ENCODE measurements at regions of chr13 and their contacts with region 1.

Region 1: DNA sequence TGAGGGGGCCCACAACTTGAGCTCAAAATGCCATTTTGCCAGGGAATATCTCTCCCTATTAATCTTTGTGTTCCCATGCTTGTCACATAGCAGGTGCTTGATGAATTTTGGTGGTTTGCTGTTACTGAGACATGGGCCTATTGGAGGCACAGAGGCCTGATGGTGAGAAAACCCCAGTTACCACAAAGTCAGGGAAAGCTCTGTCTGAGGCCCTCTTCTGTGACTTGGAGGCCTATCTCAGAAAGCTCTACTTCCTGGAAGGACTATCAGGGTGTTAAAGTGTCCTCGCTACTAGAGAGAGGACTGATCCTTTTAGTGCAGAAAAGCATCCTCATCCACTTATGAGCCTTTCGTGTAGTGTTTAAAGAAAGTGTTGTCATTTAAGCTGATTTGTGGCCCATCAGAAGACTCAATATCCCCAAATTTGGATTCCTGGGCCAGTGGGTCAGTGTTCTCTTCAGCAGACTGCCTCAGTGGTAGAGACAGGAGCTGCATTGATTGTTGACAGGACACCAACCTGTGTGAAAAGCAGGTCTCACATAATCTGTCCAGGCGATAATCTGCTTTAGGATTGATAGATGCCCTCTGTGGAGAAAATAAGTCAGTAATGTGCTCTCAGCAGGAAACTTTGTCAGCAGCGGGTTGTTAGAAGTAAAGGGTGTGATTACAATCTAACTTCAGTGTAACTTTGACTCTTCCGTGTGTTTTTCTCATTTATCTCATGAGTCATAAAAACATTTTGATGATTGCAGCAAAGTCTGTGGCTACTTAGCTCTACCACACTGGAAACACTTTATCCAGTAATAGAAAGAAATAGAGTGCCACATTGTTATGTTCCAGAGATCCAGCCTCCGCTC is 121.0 kb downstream of the AKAP11 start:
- DNase-seq: peak in 3 of 9 donors; percentile 13 to 51 (median 30)
- ATAC-seq: peak; percentile 68
- H3K4me3 ChIP-seq: no peak overlapping the region
- H3K4me3 Mint-ChIP-seq: peak overlapping the region; percentile 10 to 83 (median 68)
- H3K27ac ChIP-seq: no peak overlapping the region
- H3K27ac Mint-ChIP-seq: peak overlapping the region; percentile 2 to 98 (median 78)
- H3K4me1 ChIP-seq: peaks cover 47 to 68% of the 10 kb centered on the region in 2 donors
- H3K4me1 Mint-ChIP-seq: peaks cover 32 to 77% (median 73%) of the 10 kb centered on the region in 7 donors
- H3K27me3 ChIP-seq: no peaks in the 10 kb centered on the region
- H3K27me3 Mint-ChIP-seq: no peaks in the 10 kb centered on the region

Region 2: DNA sequence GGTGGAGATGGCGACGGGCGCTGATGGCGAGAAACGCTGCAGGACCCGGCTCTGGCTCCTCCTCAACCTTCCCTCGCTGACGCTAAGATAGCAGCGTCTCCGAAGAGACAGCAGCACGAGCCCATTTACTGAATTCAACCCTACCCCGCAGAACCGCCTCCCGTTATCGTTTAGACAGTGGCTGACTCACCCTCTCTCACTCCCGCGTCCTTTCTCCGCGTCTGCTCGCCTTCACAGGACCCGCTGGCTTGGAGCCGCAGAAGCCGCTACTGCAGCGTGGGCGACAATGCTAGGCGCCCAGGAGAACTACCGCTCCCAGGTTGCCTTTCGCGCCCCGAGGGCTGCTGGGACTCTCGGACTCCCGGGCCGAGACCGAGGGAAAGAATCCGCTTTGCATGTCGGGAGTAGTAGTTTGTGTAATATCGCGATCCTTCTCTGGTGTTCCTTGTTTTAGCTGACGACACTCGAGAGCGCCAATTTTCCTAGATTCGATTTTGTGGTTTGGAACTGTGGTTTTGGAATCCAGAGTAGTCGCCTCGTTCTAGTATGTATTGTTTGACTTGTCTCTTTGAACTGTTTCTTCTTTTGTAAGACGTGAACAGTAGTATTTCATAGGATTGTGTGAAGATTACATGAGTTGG is 1260.3 kb before region 1 on chr13 and contains the start of gene KBTBD6:
- CTCF ChIA-PET with region 1: no interaction called
- POLR2A ChIA-PET with region 1: no interaction called
- intact Hi-C with region 1: no loop called
- DNase-seq: peak; percentile 76 to 93 (median 87)
- ATAC-seq: peak; percentile 98
- H3K4me3 ChIP-seq: peak within 1 kb of the TSS; percentile 77
- H3K4me3 Mint-ChIP-seq: peak within 1 kb of the TSS; percentile 94 to 99 (median 98)
- H3K27ac ChIP-seq: peak within 1 kb of the TSS; percentile 67
- H3K27ac Mint-ChIP-seq: peak within 1 kb of the TSS; percentile 91 to 97 (median 93)
- H3K4me1 ChIP-seq: peaks cover 15 to 24% of the 10 kb centered on the region in 2 donors
- H3K4me1 Mint-ChIP-seq: peaks cover 32 to 60% (median 54%) of the 10 kb centered on the region in 7 donors
- H3K27me3 ChIP-seq: no peaks in the 10 kb centered on the region
- H3K27me3 Mint-ChIP-seq: no peaks in the 10 kb centered on the region
- total RNA-seq, gene KBTBD6: 3.9 to 9.2 (median 7.7) TPM

Region 3: DNA sequence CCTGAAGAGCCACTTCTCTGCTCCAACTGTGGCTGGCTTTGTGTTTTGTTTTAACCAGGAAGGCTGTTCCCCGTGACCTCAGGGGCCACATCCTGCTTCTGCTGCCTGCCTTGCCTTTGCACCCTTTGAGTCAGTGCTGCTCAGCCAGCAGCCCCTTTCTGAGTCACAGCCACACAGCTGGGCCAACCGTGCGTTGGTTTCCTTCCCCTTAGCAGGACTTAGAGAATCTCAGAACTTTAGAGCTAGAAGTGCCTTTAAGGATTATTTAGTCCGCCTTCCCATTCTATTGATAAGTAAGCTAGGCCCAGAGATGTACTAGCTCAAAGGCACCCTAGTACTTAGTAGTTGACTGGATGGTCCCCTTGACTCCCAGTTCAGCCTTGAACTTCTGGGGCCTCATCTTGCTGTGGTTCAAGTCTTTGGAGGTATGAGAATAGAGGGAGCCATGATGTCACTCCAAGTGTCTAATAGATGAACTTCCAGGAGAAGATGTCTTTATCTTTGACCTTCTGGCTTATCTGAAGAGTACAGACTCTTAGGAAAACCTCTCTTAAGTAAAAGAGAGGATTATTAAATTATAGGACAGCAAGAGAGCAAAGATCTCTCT is 927.6 kb before region 1 on chr13:
- CTCF ChIA-PET with region 1: no interaction called
- POLR2A ChIA-PET with region 1: no interaction called
- intact Hi-C with region 1: loop called in 1 of 2 experiments (anchors 10 kb)
- DNase-seq: peak; percentile 63 to 90 (median 89)
- ATAC-seq: peak; percentile 72
- H3K4me3 ChIP-seq: peak overlapping the region; percentile 51
- H3K4me3 Mint-ChIP-seq: peak overlapping the region; percentile 89 to 98 (median 94)
- H3K27ac ChIP-seq: peak overlapping the region; percentile 97
- H3K27ac Mint-ChIP-seq: peak overlapping the region; percentile 96 to 100 (median 99)
- H3K4me1 ChIP-seq: peaks cover 64 to 87% of the 10 kb centered on the region in 2 donors
- H3K4me1 Mint-ChIP-seq: peaks cover 64 to 98% (median 93%) of the 10 kb centered on the region in 7 donors
- H3K27me3 ChIP-seq: no peaks in the 10 kb centered on the region
- H3K27me3 Mint-ChIP-seq: no peaks in the 10 kb centered on the region

Region 4: GRCh38 chr13:42039946-42040729 is 352.8 kb before region 1 on chr13:
- CTCF ChIA-PET with region 1: no interaction called
- POLR2A ChIA-PET with region 1: no interaction called
- intact Hi-C with region 1: loop called (anchors 10 kb)
- DNase-seq: peak; percentile 67 to 87 (median 79)
- ATAC-seq: peak; percentile 92
- H3K4me3 ChIP-seq: peak overlapping the region; percentile 70
- H3K4me3 Mint-ChIP-seq: peak overlapping the region; percentile 83 to 95 (median 90)
- H3K27ac ChIP-seq: peak overlapping the region; percentile 73
- H3K27ac Mint-ChIP-seq: peak overlapping the region; percentile 29 to 91 (median 84)
- H3K4me1 ChIP-seq: peaks cover 7 to 8% of the 10 kb centered on the region in 2 donors
- H3K4me1 Mint-ChIP-seq: peaks cover 7 to 22% (median 20%) of the 10 kb centered on the region in 7 donors
- H3K27me3 ChIP-seq: no peaks in the 10 kb centered on the region
- H3K27me3 Mint-ChIP-seq: peaks cover 0 to 58% (median 0%) of the 10 kb centered on the region in 5 donors

Region 5: DNA sequence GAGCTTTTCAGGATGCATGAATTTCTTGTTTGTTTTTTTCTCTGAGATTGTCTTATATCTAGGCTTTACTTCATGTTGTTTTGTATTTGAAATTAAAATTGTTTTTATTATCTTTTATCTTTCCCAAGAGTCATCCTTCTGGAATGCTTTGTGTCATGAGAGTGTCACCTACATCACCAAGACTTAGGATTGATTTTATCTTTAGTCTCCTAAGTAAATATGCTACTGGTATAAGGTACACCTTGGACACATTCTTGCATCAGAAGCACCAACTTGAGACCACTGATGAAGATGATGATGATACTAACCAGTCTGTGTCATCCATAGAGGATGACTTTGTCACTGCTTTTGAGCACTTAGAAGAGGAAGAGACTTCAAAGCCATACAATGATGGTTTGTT is 94.5 kb before region 1 on chr13:
- CTCF ChIA-PET with region 1: no interaction called
- POLR2A ChIA-PET with region 1: no interaction called
- intact Hi-C with region 1: no loop called
- DNase-seq: no peak
- ATAC-seq: no peak
- H3K4me3 ChIP-seq: no peak overlapping the region
- H3K4me3 Mint-ChIP-seq: no peak overlapping the region
- H3K27ac ChIP-seq: no peak overlapping the region
- H3K27ac Mint-ChIP-seq: no peak overlapping the region
- H3K4me1 ChIP-seq: no peaks in the 10 kb centered on the region
- H3K4me1 Mint-ChIP-seq: peaks cover 5 to 36% (median 14%) of the 10 kb centered on the region in 7 donors
- H3K27me3 ChIP-seq: no peaks in the 10 kb centered on the region
- H3K27me3 Mint-ChIP-seq: no peaks in the 10 kb centered on the region

Region 6: GRCh38 chr13:42354241-42355091 is 38.5 kb before region 1 on chr13:
- CTCF ChIA-PET with region 1: interaction called, 3 read pairs
- POLR2A ChIA-PET with region 1: interaction called, 5 read pairs
- intact Hi-C with region 1: loop called (anchors 1 kb)
- DNase-seq: peak in 7 of 9 donors; percentile 11 to 44 (median 24)
- ATAC-seq: peak; percentile 66
- H3K4me3 ChIP-seq: peak overlapping the region; percentile 27
- H3K4me3 Mint-ChIP-seq: peak overlapping the region; percentile 52 to 79 (median 72)
- H3K27ac ChIP-seq: peak overlapping the region; percentile 56
- H3K27ac Mint-ChIP-seq: peak overlapping the region; percentile 80 to 96 (median 91)
- H3K4me1 ChIP-seq: peaks cover 33 to 35% of the 10 kb centered on the region in 2 donors
- H3K4me1 Mint-ChIP-seq: peaks cover 19 to 53% (median 48%) of the 10 kb centered on the region in 7 donors
- H3K27me3 ChIP-seq: no peaks in the 10 kb centered on the region
- H3K27me3 Mint-ChIP-seq: no peaks in the 10 kb centered on the region

Region 7: GRCh38 chr13:42405665-42406390 is 12.9 kb after region 1 on chr13:
- CTCF ChIA-PET with region 1: no interaction called
- POLR2A ChIA-PET with region 1: interaction called, 3 read pairs
- intact Hi-C with region 1: loop called (anchors 1 to 2 kb)
- DNase-seq: peak in 1 of 9 donors; percentile 70
- ATAC-seq: peak; percentile 57
- H3K4me3 ChIP-seq: no peak overlapping the region
- H3K4me3 Mint-ChIP-seq: peak overlapping the region in 2 of 10 donors; percentile 3 to 62
- H3K27ac ChIP-seq: no peak overlapping the region
- H3K27ac Mint-ChIP-seq: peak overlapping the region in 1 of 9 donors; percentile 88
- H3K4me1 ChIP-seq: peaks cover 0 to 13% of the 10 kb centered on the region in 2 donors
- H3K4me1 Mint-ChIP-seq: peaks cover 0 to 29% (median 0%) of the 10 kb centered on the region in 7 donors
- H3K27me3 ChIP-seq: no peaks in the 10 kb centered on the region
- H3K27me3 Mint-ChIP-seq: no peaks in the 10 kb centered on the region

Region 8: DNA sequence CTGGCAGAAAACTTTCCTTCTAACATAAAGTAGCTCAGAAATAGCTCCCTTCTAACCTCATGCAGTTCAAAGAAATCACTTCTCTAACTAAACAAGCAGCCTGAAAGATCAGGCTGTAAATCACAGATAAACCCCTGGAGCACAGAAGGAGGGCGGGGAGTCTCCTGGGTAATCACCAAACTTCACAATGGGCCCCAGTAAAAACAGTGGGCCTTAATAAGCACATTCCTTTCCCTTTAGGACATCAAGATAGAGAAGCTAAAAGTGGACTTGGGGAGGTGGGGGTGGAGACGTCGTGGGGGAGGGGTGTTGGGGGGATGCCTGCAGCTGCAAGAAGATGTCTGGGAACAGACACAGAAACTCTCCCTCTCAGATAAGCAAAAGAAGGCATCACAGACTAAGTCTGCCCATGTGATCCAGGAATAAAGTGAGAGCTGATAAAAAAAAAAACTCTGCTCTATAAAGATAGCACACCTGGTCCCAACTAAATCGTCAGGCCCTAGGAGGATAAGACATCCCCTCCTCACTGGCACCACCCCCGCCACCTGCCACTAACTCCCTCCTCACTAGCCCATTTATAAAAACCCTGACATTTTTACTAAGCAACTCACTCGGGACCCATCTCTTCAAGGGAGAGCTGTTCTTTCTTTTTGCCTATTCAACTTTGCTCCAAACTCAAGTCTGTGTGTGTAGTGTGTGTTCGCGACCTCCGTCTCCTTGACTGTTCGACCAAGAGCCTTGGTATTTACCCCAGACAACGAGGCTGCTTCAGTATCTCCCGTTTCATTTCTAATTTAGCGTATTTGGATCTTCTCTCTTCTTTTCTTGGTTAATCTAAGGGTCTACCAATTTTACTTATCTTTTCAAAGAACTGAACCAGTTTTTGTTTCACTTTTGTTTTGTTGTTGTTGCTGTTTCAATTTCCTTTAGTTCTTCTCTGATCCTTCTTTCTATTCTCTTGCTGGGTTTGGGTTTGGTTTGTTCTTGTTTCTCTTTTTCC is 662.2 kb after region 1 on chr13:
- CTCF ChIA-PET with region 1: no interaction called
- POLR2A ChIA-PET with region 1: no interaction called
- intact Hi-C with region 1: loop called in 1 of 2 experiments (anchors 10 kb)
- DNase-seq: peak in 7 of 9 donors; percentile 30 to 58 (median 49)
- ATAC-seq: peak; percentile 52
- H3K4me3 ChIP-seq: peak overlapping the region; percentile 62
- H3K4me3 Mint-ChIP-seq: no peak overlapping the region
- H3K27ac ChIP-seq: peak overlapping the region; percentile 78
- H3K27ac Mint-ChIP-seq: no peak overlapping the region
- H3K4me1 ChIP-seq: peaks cover 28 to 43% of the 10 kb centered on the region in 2 donors
- H3K4me1 Mint-ChIP-seq: peaks cover 5 to 38% (median 22%) of the 10 kb centered on the region in 7 donors
- H3K27me3 ChIP-seq: no peaks in the 10 kb centered on the region
- H3K27me3 Mint-ChIP-seq: no peaks in the 10 kb centered on the region

Measured in naive thymus-derived CD4-positive, alpha-beta T cell (primary cell).